ENCODE measurements at regions of chr1 and their contacts with region 1.

Region 1: DNA sequence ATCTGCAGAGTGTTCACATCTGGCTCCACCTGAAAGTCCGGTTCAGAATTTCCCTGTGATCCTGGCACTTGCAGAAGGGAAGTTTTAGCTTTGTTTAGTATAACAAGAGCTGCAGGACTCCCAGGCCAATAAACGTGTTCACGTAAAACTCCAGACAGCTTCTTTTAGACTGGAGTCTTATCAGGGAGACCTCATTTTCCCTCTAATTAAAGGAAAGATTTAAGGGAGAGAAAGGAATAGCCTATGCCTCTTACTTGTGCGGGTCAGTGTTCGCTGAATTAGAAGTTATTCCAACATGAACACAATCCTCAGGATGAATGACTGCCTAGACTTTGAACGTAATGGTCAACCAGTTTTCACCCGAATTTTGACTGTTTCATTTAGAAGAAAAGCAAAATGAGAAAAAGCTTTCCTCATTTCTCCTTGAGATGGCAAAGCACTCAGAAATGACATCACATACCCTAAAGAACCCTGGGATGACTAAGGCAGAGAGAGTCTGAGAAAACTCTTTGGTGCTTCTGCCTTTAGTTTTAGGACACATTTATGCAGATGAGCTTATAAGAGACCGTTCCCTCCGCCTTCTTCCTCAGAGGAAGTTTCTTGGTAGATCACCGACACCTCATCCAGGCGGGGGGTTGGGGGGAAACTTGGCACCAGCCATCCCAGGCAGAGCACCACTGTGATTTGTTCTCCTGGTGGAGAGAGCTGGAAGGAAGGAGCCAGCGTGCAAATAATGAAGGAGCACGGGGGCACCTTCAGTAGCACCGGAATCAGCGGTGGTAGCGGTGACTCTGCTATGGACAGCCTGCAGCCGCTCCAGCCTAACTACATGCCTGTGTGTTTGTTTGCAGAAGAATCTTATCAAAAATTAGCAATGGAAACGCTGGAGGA is 202.1 kb upstream of the SGIP1 start:
- DNase-seq: peak in 13 of 14 experiments; percentile 23 to 80 (median 34)
- ATAC-seq: peak; percentile 22
- H3K4me3 ChIP-seq: peak overlapping the region; percentile 85
- H3K4me3 Mint-ChIP-seq: peak overlapping the region; percentile 99
- H3K27ac ChIP-seq: peak overlapping the region; percentile 48 to 82
- H3K27ac Mint-ChIP-seq: peak overlapping the region; percentile 99
- H3K4me1 ChIP-seq: peaks cover 30% of the 10 kb centered on the region
- H3K4me1 Mint-ChIP-seq: peaks cover 77% of the 10 kb centered on the region
- H3K27me3 ChIP-seq: no peaks in the 10 kb centered on the region
- H3K27me3 Mint-ChIP-seq: no peaks in the 10 kb centered on the region
- CTCF ChIP-seq: no peak

Region 2: GRCh38 chr1:66084442-66084841 is 247.5 kb before region 1 on chr1:
- CTCF ChIA-PET with region 1: no interaction called
- POLR2A ChIA-PET with region 1: no interaction called
- intact Hi-C with region 1: no loop called
- DNase-seq: no peak
- ATAC-seq: no peak
- H3K4me3 ChIP-seq: no peak overlapping the region
- H3K4me3 Mint-ChIP-seq: no peak overlapping the region
- H3K27ac ChIP-seq: no peak overlapping the region
- H3K27ac Mint-ChIP-seq: no peak overlapping the region
- H3K4me1 ChIP-seq: no peaks in the 10 kb centered on the region
- H3K4me1 Mint-ChIP-seq: no peaks in the 10 kb centered on the region
- H3K27me3 ChIP-seq: peaks cover 0 to 10% of the 10 kb centered on the region in 2 experiments
- H3K27me3 Mint-ChIP-seq: peaks cover 20% of the 10 kb centered on the region
- CTCF ChIP-seq: no peak

Region 3: DNA sequence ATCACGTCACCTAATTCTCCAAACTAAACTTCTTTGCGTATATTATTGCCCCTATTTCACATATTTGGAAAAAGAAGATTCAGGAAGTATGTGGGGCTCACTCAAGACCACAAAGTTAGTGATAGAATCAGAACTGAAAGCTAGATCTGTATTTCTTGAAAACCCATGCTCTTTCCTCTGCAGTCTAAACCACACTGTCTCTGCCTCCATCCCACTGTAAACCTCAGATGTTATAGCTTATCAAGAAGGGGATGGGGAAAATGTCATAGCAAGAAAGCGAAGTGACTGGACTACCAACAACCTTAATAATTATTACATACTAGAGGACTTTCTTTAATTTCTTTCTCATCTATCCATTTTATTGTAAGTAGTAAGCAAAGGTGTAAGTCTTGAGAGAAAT is 55.7 kb before region 1 on chr1:
- CTCF ChIA-PET with region 1: interaction called, 35 read pairs
- POLR2A ChIA-PET with region 1: interaction called, 38 read pairs
- intact Hi-C with region 1: loop called in 1 of 2 experiments (anchors 2 kb)
- DNase-seq: peak in 3 of 14 experiments; percentile 54 to 80 (median 64)
- ATAC-seq: peak; percentile 51
- H3K4me3 ChIP-seq: peak overlapping the region; percentile 17
- H3K4me3 Mint-ChIP-seq: peak overlapping the region; percentile 81
- H3K27ac ChIP-seq: peak overlapping the region; percentile 44 to 47
- H3K27ac Mint-ChIP-seq: peak overlapping the region; percentile 78
- H3K4me1 ChIP-seq: peaks cover 70% of the 10 kb centered on the region
- H3K4me1 Mint-ChIP-seq: peaks cover 91% of the 10 kb centered on the region
- H3K27me3 ChIP-seq: no peaks in the 10 kb centered on the region
- H3K27me3 Mint-ChIP-seq: no peaks in the 10 kb centered on the region
- CTCF ChIP-seq: no peak

Region 4: DNA sequence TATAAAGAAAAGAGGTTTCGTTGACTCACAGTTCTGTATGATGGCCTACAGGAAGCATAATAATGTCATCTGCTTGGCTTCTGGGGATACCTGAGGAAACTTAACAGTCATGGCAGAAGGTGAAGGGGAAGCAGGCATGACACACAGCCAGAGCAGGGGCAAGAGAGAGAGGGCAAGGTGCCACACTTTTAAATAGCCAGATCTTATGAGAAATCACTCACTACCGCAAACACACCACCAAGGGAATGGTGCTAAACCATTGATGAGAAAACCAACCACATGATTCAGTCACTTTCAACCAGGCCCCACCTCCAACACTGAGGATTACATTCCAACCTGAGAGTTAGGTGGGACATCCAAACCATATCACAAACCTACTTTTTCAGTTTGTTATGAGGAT is 43.9 kb before region 1 on chr1:
- CTCF ChIA-PET with region 1: interaction called, 35 read pairs
- POLR2A ChIA-PET with region 1: interaction called, 38 read pairs
- intact Hi-C with region 1: no loop called
- DNase-seq: no peak
- ATAC-seq: no peak
- H3K4me3 ChIP-seq: no peak overlapping the region
- H3K4me3 Mint-ChIP-seq: no peak overlapping the region
- H3K27ac ChIP-seq: no peak overlapping the region
- H3K27ac Mint-ChIP-seq: no peak overlapping the region
- H3K4me1 ChIP-seq: peaks cover 19% of the 10 kb centered on the region
- H3K4me1 Mint-ChIP-seq: peaks cover 66% of the 10 kb centered on the region
- H3K27me3 ChIP-seq: no peaks in the 10 kb centered on the region
- H3K27me3 Mint-ChIP-seq: no peaks in the 10 kb centered on the region
- CTCF ChIP-seq: no peak

Region 5: DNA sequence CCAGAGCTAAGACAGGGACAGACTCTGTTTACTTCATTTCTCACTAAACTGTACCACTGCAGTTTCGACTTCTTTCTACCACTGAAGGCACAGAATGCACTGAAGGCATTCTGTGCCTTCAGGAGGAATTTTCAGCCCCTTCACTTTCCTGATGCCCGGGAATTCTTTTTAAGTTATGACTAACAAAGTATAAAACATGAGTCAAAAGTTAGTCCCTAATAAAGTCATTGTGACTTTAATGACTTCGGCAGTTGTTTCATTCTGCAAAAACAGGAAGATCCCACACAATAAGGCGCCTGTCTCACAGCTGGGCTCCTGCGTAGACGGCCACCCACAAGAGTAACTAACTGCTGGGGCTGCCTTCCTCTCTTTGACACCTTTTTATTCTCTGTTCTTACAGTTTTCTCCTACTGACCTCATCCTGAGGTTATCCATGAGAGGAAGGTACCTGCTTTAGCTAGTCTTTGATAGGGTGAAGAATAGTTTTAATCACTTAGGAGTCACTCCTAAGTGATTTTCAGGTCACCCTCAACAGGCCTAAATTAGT is 18.2 kb after region 1 on chr1:
- CTCF ChIA-PET with region 1: interaction called, 25 read pairs
- POLR2A ChIA-PET with region 1: interaction called, 167 read pairs
- intact Hi-C with region 1: loop called in 1 of 2 experiments (anchors 1 kb)
- DNase-seq: peak in 11 of 14 experiments; percentile 36 to 88 (median 63)
- ATAC-seq: peak; percentile 72
- H3K4me3 ChIP-seq: peak overlapping the region; percentile 8
- H3K4me3 Mint-ChIP-seq: peak overlapping the region; percentile 84
- H3K27ac ChIP-seq: peak overlapping the region; percentile 65 to 77
- H3K27ac Mint-ChIP-seq: peak overlapping the region; percentile 87
- H3K4me1 ChIP-seq: peaks cover 52% of the 10 kb centered on the region
- H3K4me1 Mint-ChIP-seq: peaks cover 96% of the 10 kb centered on the region
- H3K27me3 ChIP-seq: no peaks in the 10 kb centered on the region
- H3K27me3 Mint-ChIP-seq: no peaks in the 10 kb centered on the region
- CTCF ChIP-seq: no peak

Region 6: GRCh38 chr1:66374561-66375111 is 42.7 kb after region 1 on chr1:
- CTCF ChIA-PET with region 1: interaction called, 4 read pairs
- POLR2A ChIA-PET with region 1: interaction called, 13 read pairs
- intact Hi-C with region 1: loop called (anchors 2 to 5 kb)
- DNase-seq: peak in 4 of 14 experiments; percentile 19 to 78 (median 74)
- ATAC-seq: peak; percentile 76
- H3K4me3 ChIP-seq: no peak overlapping the region
- H3K4me3 Mint-ChIP-seq: peak overlapping the region; percentile 75
- H3K27ac ChIP-seq: peak overlapping the region; percentile 54 to 57
- H3K27ac Mint-ChIP-seq: peak overlapping the region; percentile 93
- H3K4me1 ChIP-seq: peaks cover 59% of the 10 kb centered on the region
- H3K4me1 Mint-ChIP-seq: peaks cover 66% of the 10 kb centered on the region
- H3K27me3 ChIP-seq: no peaks in the 10 kb centered on the region
- H3K27me3 Mint-ChIP-seq: no peaks in the 10 kb centered on the region
- CTCF ChIP-seq: no peak